BJ (cell line): ENCODE measurements at regions of chr15 and their contacts with region 1.

Region 1: DNA sequence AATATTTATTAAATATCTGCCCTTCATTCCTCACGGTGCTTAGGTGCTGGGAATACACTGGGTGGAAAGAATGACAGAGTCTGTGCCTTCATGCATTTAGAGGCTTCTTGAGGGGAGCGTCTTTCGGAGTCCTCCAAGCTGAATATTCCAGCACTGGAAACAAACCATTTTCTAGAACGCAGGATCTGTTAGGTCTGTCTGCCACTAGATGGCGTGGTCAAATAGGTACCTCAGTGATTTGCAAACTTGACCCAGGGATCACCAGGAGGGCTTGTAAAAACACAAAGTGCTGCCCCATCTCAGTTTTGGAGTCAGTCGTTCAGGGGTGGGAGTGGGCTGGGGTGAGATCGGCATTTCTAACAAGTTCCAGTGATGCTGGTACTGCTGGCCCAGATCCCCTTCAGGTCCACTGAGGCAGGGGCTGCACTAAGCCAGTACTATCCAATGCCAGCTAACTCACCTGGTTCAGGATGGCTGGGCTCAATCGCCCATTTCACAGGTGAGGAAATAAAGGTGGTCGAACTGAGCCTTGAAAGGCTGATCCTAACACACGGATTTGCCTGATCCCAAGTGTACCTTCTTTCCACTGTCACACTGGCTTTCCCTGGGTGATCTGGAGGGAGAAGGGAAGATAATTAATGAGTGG is 14.8 kb downstream of the ARNT2 start:
- DNase-seq: no peak
- H3K4me3 ChIP-seq: no peak overlapping the region
- H3K27me3 ChIP-seq: no peaks in the 10 kb centered on the region
- CTCF ChIP-seq: peak; percentile 84

Region 2: GRCh38 chr15:80367094-80367493 is 51.9 kb before region 1 on chr15:
- CTCF ChIA-PET with region 1: no interaction called
- POLR2A ChIA-PET with region 1: no interaction called
- DNase-seq: no peak
- H3K4me3 ChIP-seq: no peak overlapping the region
- H3K27me3 ChIP-seq: peaks cover 3% of the 10 kb centered on the region
- CTCF ChIP-seq: 0 out of 2 replicates have a peak, but pooled peaks have one; percentile 13

Region 3: DNA sequence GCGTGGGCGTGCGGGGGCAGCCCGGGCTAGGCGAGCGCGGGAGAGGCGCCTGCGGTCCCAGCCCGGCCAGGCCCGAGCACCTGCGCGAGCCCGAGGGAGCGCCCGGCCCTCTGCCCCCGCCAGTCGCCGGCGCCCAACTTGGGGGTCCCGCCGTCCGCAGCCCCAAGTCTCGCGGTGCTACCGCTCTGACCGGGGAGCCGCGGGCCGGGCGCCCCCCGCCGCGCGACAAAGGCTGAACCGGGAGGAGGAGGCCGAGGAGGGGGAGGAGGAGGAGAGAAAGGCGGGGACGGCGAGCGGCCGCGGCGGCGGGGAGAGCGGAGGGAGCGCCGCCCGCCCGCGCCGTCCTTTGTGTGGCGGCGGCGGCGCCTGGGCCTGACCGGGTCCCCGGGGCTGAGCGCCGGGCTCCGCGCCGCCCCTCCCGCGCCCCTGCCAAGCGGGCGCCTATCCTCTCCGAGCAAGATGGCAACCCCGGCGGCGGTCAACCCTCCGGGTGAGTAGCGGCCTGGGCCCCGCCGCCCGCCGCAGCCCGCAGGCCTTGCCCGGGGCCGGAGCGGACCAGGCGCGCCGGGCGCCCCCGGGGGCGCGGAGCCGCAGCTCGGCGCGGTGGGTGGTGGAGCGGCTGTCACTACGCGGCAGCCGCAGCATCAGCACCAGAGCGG is 14.8 kb before region 1 on chr15 and contains the start of gene ARNT2:
- CTCF ChIA-PET with region 1: interaction called, 32 read pairs
- POLR2A ChIA-PET with region 1: no interaction called
- DNase-seq: no peak
- H3K4me3 ChIP-seq: peak within 1 kb of the TSS; percentile 58
- H3K27me3 ChIP-seq: peaks cover 1% of the 10 kb centered on the region; the same call in 1 of the 2 replicates
- CTCF ChIP-seq: no peak
- polyA plus RNA-seq, gene ARNT2: 27.5 and 44.6 TPM in 2 replicates

Region 4: GRCh38 chr15:80429964-80430363 is 10.9 kb after region 1 on chr15:
- CTCF ChIA-PET with region 1: interaction called, 19 read pairs
- POLR2A ChIA-PET with region 1: no interaction called
- DNase-seq: no peak
- H3K4me3 ChIP-seq: no peak overlapping the region
- H3K27me3 ChIP-seq: no peaks in the 10 kb centered on the region
- CTCF ChIP-seq: no peak

Region 5: GRCh38 chr15:80436511-80437307 is 17.7 kb after region 1 on chr15:
- CTCF ChIA-PET with region 1: interaction called, 13 read pairs
- POLR2A ChIA-PET with region 1: no interaction called
- DNase-seq: no peak
- H3K4me3 ChIP-seq: no peak overlapping the region
- H3K27me3 ChIP-seq: no peaks in the 10 kb centered on the region
- CTCF ChIP-seq: no peak